ENCODE measurements at regions of chr16 and their contacts with region 1.

Region 1: GRCh38 chr16:57899771-57900661 is 70.9 kb downstream of the CNGB1 start:
- DNase-seq: peak; percentile 66 to 74
- ATAC-seq: peak; percentile 81 to 82
- H3K4me3 ChIP-seq: no peak overlapping the region
- H3K27ac ChIP-seq: peak overlapping the region; percentile 53 to 94
- H3K4me1 ChIP-seq: peaks cover 39% of the 10 kb centered on the region
- CTCF ChIP-seq: peak; percentile 97
- EP300 ChIP-seq: no peak
- POLR2A ChIP-seq: no peak
- RAD21 ChIP-seq: peak; percentile 93

Region 2: DNA sequence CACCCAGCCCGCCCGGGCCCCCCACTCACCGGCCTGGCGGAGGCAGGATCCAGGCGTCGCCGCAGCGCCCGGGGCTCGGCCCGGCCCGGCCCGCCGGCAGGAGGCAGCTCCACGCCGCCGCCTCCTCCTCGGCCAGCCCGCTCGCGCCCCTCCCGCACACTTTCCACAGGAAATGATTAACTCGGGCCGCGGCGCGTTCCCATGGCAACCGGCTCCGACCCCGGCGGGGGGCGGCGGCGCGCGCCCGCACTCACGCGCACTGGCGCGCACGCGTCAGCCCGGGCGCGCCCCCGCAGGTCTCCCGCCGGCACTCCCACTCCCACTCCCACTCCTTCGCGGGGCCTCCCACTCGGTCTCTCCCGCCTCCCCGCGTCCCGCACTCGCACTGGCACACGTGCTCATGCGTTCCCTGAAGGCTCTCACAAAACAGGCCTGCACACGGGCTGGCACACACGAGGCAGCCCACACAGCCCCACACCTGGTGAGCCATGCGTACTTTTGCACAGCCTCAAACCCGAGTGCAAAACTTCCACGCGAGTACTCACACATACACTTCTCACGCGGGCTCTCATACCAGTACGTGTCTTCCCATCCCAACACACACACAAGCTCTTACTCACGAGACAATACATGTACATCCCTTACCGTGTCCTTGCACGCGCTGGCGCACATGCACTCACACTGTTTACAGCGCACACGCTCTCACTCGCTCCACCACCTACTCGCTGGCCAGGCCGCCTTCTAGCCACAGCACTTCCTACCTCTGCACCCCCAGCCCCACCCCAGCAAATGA is 97.5 kb before region 1 on chr16 and contains the start of gene KIFC3:
- CTCF ChIA-PET with region 1: interaction called, 22 read pairs
- POLR2A ChIA-PET with region 1: interaction called, 6 read pairs
- DNase-seq: peak in 1 of 2 experiments; percentile 86
- ATAC-seq: peak; percentile 2 to 49
- H3K4me3 ChIP-seq: peak within 1 kb of the TSS; percentile 53
- H3K27ac ChIP-seq: peak within 1 kb of the TSS; percentile 91 to 100
- H3K4me1 ChIP-seq: peaks cover 57% of the 10 kb centered on the region
- CTCF ChIP-seq: peak; percentile 39
- EP300 ChIP-seq: peak in 1 of 2 experiments; percentile 7; a peak in 1 of 5 replicates
- POLR2A ChIP-seq: no peak; the same call in 1 of the 2 replicates
- RAD21 ChIP-seq: no peak; a peak in 2 of 5 replicates
- polyA plus RNA-seq, gene KIFC3: 127 and 128 TPM in 2 replicates

Region 3: GRCh38 chr16:57955572-57956188 is 55.7 kb after region 1 on chr16:
- CTCF ChIA-PET with region 1: interaction called, 16 read pairs
- POLR2A ChIA-PET with region 1: no interaction called
- DNase-seq: peak in 1 of 2 experiments; percentile 40
- ATAC-seq: peak; percentile 72 to 76; a peak in 5 of 6 replicates
- H3K4me3 ChIP-seq: no peak overlapping the region
- H3K27ac ChIP-seq: peak overlapping the region in 1 of 2 experiments; percentile 35; a peak in 2 of 6 replicates
- H3K4me1 ChIP-seq: 0 out of 3 replicates have a peak, but pooled peaks cover 3% of the 10 kb centered on the region
- CTCF ChIP-seq: no peak
- EP300 ChIP-seq: no peak
- POLR2A ChIP-seq: no peak
- RAD21 ChIP-seq: no peak

Region 4: DNA sequence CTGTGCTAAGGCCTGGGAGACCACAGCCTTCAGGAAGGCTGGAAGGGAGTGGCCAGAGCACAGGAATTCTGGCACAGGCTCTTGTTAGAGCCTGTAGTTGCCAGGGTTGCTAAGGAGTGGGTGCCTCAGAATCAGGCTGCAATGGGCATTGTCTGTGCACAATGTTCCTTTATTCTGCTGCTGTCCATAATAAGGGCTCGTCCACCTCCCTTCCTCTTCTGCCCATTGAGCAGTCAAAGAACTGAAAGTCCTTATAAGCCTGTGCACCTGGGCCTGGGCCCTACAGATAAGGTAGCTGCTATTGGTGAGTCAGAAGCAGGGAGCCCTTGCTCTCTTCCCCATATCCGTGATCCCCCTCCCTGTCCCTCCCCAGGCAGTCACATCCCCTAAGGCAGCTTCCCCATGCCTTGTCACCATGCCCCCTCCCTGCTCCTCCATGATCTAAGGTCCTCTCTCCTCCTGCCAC is 76.3 kb after region 1 on chr16:
- CTCF ChIA-PET with region 1: interaction called, 31 read pairs
- POLR2A ChIA-PET with region 1: no interaction called
- DNase-seq: no peak
- ATAC-seq: peak; percentile 28 to 57; a peak in 3 of 6 replicates
- H3K4me3 ChIP-seq: no peak overlapping the region
- H3K27ac ChIP-seq: peak overlapping the region in 1 of 2 experiments; percentile 23; a peak in 3 of 6 replicates
- H3K4me1 ChIP-seq: 0 out of 3 replicates have a peak, but pooled peaks cover 3% of the 10 kb centered on the region
- CTCF ChIP-seq: no peak
- EP300 ChIP-seq: no peak
- POLR2A ChIP-seq: no peak
- RAD21 ChIP-seq: no peak

Region 5: GRCh38 chr16:57985204-57986181 is 85.5 kb after region 1 on chr16:
- CTCF ChIA-PET with region 1: interaction called, 31 read pairs
- POLR2A ChIA-PET with region 1: no interaction called
- DNase-seq: no peak
- ATAC-seq: peak; percentile 16 to 57; a peak in 3 of 6 replicates
- H3K4me3 ChIP-seq: peak overlapping the region; percentile 54
- H3K27ac ChIP-seq: peak overlapping the region in 1 of 2 experiments; percentile 86; a peak in 3 of 6 replicates
- H3K4me1 ChIP-seq: peaks cover 12% of the 10 kb centered on the region
- CTCF ChIP-seq: no peak
- EP300 ChIP-seq: no peak
- POLR2A ChIP-seq: no peak
- RAD21 ChIP-seq: no peak

Region 6: GRCh38 chr16:58000706-58001676 is 101.0 kb after region 1 on chr16 and contains the start of gene USB1:
- CTCF ChIA-PET with region 1: interaction called, 160 read pairs
- POLR2A ChIA-PET with region 1: no interaction called
- DNase-seq: peak; percentile 91 to 97
- ATAC-seq: peak; percentile 84 to 93
- H3K4me3 ChIP-seq: peak within 1 kb of the TSS; percentile 99
- H3K27ac ChIP-seq: peak within 1 kb of the TSS; percentile 98
- H3K4me1 ChIP-seq: peaks cover 41% of the 10 kb centered on the region
- CTCF ChIP-seq: peak; percentile 77
- EP300 ChIP-seq: no peak
- POLR2A ChIP-seq: peak; percentile 90
- RAD21 ChIP-seq: peak; percentile 48 to 89; a peak in 4 of 5 replicates
- polyA plus RNA-seq, gene USB1: 88.2 and 88.8 TPM in 2 replicates

Region 7: DNA sequence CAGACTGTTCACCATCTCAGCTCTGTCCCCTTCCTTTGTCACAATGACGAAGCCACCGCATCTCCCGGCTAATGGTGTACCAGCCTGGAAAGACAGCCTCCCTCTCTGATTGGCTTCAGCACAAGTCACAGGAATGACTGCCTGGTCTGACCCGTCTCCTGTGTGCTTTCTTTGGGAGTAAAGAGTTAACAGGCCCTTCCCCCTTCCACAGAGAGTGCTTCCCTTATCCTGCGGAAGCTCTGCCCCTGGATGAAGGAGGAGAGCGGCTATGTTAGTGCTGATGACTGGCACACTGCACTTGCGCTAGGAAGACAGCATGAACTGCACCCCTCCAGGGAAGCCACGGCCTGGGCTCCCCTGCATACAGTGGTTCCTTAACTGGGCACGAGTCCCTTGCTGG is 112.5 kb after region 1 on chr16:
- CTCF ChIA-PET with region 1: interaction called, 17 read pairs
- POLR2A ChIA-PET with region 1: no interaction called
- DNase-seq: no peak
- ATAC-seq: no peak; a peak in 1 of 6 replicates
- H3K4me3 ChIP-seq: no peak overlapping the region
- H3K27ac ChIP-seq: no peak overlapping the region
- H3K4me1 ChIP-seq: peaks cover 23% of the 10 kb centered on the region
- CTCF ChIP-seq: no peak
- EP300 ChIP-seq: no peak
- POLR2A ChIP-seq: no peak
- RAD21 ChIP-seq: no peak